AG04450 (cell line): ENCODE measurements at regions of chr10 and their contacts with region 1.

Region 1: DNA sequence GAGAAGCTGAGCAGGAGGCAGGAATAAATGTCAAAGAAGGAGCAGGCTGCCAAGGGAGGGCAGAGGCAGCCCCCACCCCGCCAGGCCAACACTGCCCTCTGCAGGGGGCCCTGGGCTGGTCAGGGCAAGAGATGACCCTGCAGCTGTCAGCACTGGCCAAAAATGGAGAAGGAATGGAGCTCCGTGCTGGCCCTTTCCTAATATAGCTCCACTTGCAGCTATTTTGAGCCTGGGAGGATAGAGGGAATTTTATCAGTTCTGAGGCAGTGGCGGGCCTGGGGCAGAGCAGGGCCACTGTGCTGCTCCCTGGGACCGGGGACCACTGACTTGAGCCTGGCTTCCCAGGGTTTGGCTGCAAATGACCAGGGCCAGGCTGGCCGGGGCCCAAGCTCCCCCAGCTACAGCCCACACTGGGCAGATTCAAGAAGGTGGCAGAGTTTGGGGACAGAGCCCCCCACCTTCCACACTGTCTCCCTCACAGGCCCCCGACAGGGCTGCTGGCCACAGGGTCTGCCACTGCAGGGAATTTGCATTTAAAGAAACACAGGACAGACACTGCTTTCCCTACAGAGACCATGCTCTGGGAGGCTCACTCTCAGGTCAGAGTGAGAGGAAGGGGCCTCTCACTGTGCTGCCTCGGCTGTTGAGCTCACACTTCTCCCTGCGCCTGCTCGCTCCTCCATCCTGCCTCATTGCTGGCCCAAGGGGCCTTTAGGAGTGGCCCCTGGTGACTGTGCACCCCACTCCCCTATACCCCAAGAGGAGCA is 16.2 kb downstream of the LDB3 start:
- DNase-seq: no peak
- H3K4me3 ChIP-seq: no peak overlapping the region
- H3K27ac ChIP-seq: no peak overlapping the region
- H3K27me3 ChIP-seq: peaks cover 5% of the 10 kb centered on the region
- CTCF ChIP-seq: peak; percentile 60

Region 2: GRCh38 chr10:86671985-86672710 is 12.4 kb before region 1 on chr10:
- CTCF ChIA-PET with region 1: interaction called, 13 read pairs
- POLR2A ChIA-PET with region 1: no interaction called
- DNase-seq: no peak
- H3K4me3 ChIP-seq: no peak overlapping the region
- H3K27ac ChIP-seq: no peak overlapping the region
- H3K27me3 ChIP-seq: peaks cover 3% of the 10 kb centered on the region
- CTCF ChIP-seq: no peak

Region 3: GRCh38 chr10:86775056-86775869 is 90.7 kb after region 1 on chr10:
- CTCF ChIA-PET with region 1: no interaction called
- POLR2A ChIA-PET with region 1: no interaction called
- DNase-seq: no peak
- H3K4me3 ChIP-seq: no peak overlapping the region
- H3K27ac ChIP-seq: peak overlapping the region; percentile 4
- H3K27me3 ChIP-seq: no peaks in the 10 kb centered on the region
- CTCF ChIP-seq: no peak